Activated CD4-positive, alpha-beta T cell treated with anti-CD3 and anti-CD28 coated beads, Interleukin-2, amount 10 ng/mL, durations not matched to agents 7 days and 5 days (primary cell): ENCODE measurements at regions of chr7 and their contacts with region 1.

Region 1: GRCh38 chr7:50206453-50207250 is 97.9 kb upstream of the IKZF1 start:
- DNase-seq: peak; percentile 78
- H3K4me3 Mint-ChIP-seq: peak overlapping the region; percentile 51
- H3K27ac Mint-ChIP-seq: peak overlapping the region; percentile 93
- H3K4me1 Mint-ChIP-seq: peaks cover 95% of the 10 kb centered on the region
- H3K27me3 Mint-ChIP-seq: no peaks in the 10 kb centered on the region

Region 2: GRCh38 chr7:50166997-50167965 is 39.4 kb before region 1 on chr7:
- CTCF ChIA-PET with region 1: no interaction called
- POLR2A ChIA-PET with region 1: no interaction called
- DNase-seq: peak; percentile 44
- H3K4me3 Mint-ChIP-seq: no peak overlapping the region
- H3K27ac Mint-ChIP-seq: peak overlapping the region; percentile 91
- H3K4me1 Mint-ChIP-seq: peaks cover 61% of the 10 kb centered on the region
- H3K27me3 Mint-ChIP-seq: peaks cover 10% of the 10 kb centered on the region

Region 3: GRCh38 chr7:50227726-50228125 is 21.1 kb after region 1 on chr7:
- CTCF ChIA-PET with region 1: interaction called, 20 read pairs
- POLR2A ChIA-PET with region 1: no interaction called
- DNase-seq: no peak
- H3K4me3 Mint-ChIP-seq: peak overlapping the region; percentile 45
- H3K27ac Mint-ChIP-seq: peak overlapping the region; percentile 92
- H3K4me1 Mint-ChIP-seq: peaks cover 42% of the 10 kb centered on the region
- H3K27me3 Mint-ChIP-seq: no peaks in the 10 kb centered on the region

Region 4: GRCh38 chr7:50272808-50273207 is 66.2 kb after region 1 on chr7:
- CTCF ChIA-PET with region 1: interaction called, 26 read pairs
- POLR2A ChIA-PET with region 1: interaction called, 3 read pairs
- DNase-seq: no peak
- H3K4me3 Mint-ChIP-seq: no peak overlapping the region
- H3K27ac Mint-ChIP-seq: no peak overlapping the region
- H3K4me1 Mint-ChIP-seq: peaks cover 62% of the 10 kb centered on the region
- H3K27me3 Mint-ChIP-seq: no peaks in the 10 kb centered on the region

Region 5: DNA sequence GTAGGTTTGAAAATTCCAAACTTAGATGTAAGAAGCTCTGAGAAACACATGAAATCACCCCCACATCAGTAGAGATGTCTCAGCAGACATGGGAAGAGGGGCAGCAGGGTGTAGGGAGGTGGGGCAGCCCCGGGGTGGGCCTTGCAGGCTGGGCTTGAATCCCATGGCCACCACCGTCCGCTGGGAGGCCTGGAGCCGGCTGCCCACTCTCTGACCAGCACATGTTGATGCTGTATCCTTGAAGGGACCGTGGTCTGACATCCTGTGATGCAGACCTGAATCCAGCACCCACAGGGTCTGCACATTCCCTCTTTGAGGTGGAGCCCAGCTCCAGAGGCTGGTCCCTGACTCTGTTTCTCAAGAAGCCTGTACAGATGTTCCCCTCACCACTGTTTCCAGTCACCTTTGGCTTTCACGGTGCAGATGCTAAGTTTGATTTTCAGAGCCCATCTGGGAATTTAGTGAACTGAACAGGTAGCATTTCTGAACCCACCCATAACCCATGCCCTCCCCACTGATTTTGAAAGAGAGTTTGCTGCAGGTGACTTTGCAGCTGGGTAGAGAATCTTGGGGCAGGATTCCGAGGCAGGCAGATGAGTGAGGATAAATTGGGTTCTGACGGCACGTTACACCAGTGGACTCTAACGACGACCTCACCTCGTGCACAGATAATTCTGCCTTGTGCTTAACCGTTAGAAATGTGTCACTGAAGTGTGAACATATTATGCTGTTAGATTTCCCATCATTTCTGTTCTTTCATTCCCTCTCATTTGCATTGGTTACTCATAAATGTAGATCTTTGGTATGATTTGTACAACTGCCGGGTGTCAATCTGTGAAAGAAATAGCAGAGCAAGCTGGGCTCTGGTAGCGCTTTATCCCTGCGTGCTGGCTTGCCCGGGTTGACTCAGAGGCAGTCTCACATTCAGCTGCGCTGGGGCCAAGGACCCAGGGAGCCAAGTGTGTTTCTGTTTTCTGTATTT is 143.6 kb after region 1 on chr7:
- CTCF ChIA-PET with region 1: interaction called, 30 read pairs
- POLR2A ChIA-PET with region 1: interaction called, 3 read pairs
- DNase-seq: peak; percentile 80
- H3K4me3 Mint-ChIP-seq: peak overlapping the region; percentile 61
- H3K27ac Mint-ChIP-seq: peak overlapping the region; percentile 94
- H3K4me1 Mint-ChIP-seq: peaks cover 97% of the 10 kb centered on the region
- H3K27me3 Mint-ChIP-seq: no peaks in the 10 kb centered on the region

Region 6: GRCh38 chr7:50418086-50418515 is 211.4 kb after region 1 on chr7:
- CTCF ChIA-PET with region 1: interaction called, 16 read pairs
- POLR2A ChIA-PET with region 1: no interaction called
- DNase-seq: peak; percentile 85
- H3K4me3 Mint-ChIP-seq: no peak overlapping the region
- H3K27ac Mint-ChIP-seq: no peak overlapping the region
- H3K4me1 Mint-ChIP-seq: peaks cover 30% of the 10 kb centered on the region
- H3K27me3 Mint-ChIP-seq: no peaks in the 10 kb centered on the region